MCF 10A (cell line): ENCODE measurements at regions of chr12 and their contacts with region 1.

Region 1: DNA sequence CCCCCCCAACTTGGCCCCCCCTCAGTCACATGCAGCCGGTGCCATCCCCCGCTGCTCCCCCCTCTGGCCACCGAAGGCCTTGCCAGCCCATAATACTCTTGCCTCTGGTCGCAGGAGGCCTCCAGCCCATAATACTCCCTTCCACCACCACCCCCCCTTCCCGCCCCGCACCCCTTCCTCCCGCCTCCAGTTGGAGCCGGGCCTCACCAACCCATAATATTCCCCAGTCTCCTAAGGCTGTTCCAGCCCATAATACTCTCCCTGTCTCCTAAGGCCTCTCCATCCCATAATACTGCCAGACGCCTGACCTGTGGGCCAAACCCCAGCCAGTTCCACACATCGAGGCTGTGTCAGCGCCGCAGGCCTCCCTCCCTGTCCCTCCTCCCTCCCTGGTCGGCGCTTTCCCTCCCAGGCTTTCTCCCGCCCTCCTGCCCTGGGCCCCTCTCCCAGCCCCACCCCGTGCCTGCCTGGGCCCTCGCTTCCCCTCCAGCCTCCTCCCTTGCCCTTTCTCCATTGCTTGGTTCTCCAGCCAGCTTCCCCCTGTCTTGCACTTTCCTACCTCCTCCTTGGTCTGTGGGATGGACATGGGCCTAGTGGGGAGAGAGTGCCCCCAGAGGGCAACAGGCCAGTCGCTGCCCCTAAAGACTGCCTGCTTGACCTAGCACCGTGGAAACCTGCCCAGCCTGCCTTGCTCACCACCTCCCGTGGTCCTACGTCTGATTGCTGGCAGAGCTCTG is 6.8 kb upstream of the CHD4 start:
- DNase-seq: peak; percentile 86
- H3K4me3 Mint-ChIP-seq: no peak overlapping the region
- H3K27ac Mint-ChIP-seq: peak overlapping the region; percentile 90
- H3K4me1 Mint-ChIP-seq: peaks cover 32% of the 10 kb centered on the region
- H3K27me3 Mint-ChIP-seq: no peaks in the 10 kb centered on the region
- CTCF ChIP-seq: no peak

Region 2: DNA sequence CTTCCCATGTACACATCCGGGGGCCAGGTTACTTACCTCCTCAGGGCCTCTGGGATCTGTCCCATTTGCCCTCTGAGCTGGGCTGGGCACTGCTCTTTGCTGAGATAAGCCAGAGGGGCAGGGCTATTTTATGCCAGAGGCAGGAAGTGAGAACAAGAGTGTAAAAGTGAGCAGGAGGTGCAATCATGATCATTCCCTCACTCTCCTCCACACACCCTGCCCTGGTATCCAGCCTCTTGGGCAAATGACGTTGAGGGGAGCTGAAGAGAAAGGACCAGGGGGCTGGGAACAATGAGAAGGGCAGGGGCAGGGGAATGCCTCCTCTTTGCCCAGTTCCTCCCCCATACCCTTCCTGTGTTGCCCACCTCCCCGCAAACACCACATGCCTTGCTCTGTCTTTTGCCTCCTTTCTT is 17.6 kb after region 1 on chr12:
- CTCF ChIA-PET with region 1: interaction called, 10 read pairs
- POLR2A ChIA-PET with region 1: interaction called, 5 read pairs
- intact Hi-C with region 1: no loop called
- DNase-seq: no peak
- H3K4me3 Mint-ChIP-seq: no peak overlapping the region
- H3K27ac Mint-ChIP-seq: no peak overlapping the region
- H3K4me1 Mint-ChIP-seq: peaks cover 17% of the 10 kb centered on the region
- H3K27me3 Mint-ChIP-seq: no peaks in the 10 kb centered on the region
- CTCF ChIP-seq: no peak

Region 3: GRCh38 chr12:6662906-6663742 is 49.2 kb after region 1 on chr12 and contains the start of gene ING4:
- CTCF ChIA-PET with region 1: interaction called, 3 read pairs
- POLR2A ChIA-PET with region 1: no interaction called
- intact Hi-C with region 1: loop called (anchors 1 kb)
- DNase-seq: peak; percentile 100
- H3K4me3 Mint-ChIP-seq: peak within 1 kb of the TSS; percentile 82
- H3K27ac Mint-ChIP-seq: peak within 1 kb of the TSS; percentile 81
- H3K4me1 Mint-ChIP-seq: peaks cover 8% of the 10 kb centered on the region
- H3K27me3 Mint-ChIP-seq: no peaks in the 10 kb centered on the region
- CTCF ChIP-seq: no peak
- total RNA-seq, gene ING4: 15.2 and 16.1 TPM in 2 replicates

Region 4: GRCh38 chr12:6697584-6698351 is 83.8 kb after region 1 on chr12:
- CTCF ChIA-PET with region 1: no interaction called
- POLR2A ChIA-PET with region 1: no interaction called
- intact Hi-C with region 1: loop called (anchors 1 kb)
- DNase-seq: peak; percentile 73
- H3K4me3 Mint-ChIP-seq: no peak overlapping the region
- H3K27ac Mint-ChIP-seq: no peak overlapping the region
- H3K4me1 Mint-ChIP-seq: peaks cover 8% of the 10 kb centered on the region
- H3K27me3 Mint-ChIP-seq: peaks cover 60% of the 10 kb centered on the region
- CTCF ChIP-seq: peak; percentile 66

Region 5: GRCh38 chr12:6708960-6709394 is 95.0 kb after region 1 on chr12:
- CTCF ChIA-PET with region 1: no interaction called
- POLR2A ChIA-PET with region 1: no interaction called
- intact Hi-C with region 1: no loop called
- DNase-seq: no peak
- H3K4me3 Mint-ChIP-seq: no peak overlapping the region
- H3K27ac Mint-ChIP-seq: no peak overlapping the region
- H3K4me1 Mint-ChIP-seq: no peaks in the 10 kb centered on the region
- H3K27me3 Mint-ChIP-seq: peaks cover 14% of the 10 kb centered on the region
- CTCF ChIP-seq: no peak